Ascending aorta (tissue), 2 donors: ENCODE measurements at regions of chr4 and their contacts with region 1.

Region 1: GRCh38 chr4:16516796-16517439 is 290.6 kb upstream of the TAPT1 start:
- DNase-seq: peak in 1 of 2 donors; percentile 66
- H3K4me3 ChIP-seq: no peak overlapping the region
- H3K27ac ChIP-seq: no peak overlapping the region
- H3K4me1 ChIP-seq: no peaks in the 10 kb centered on the region
- H3K27me3 ChIP-seq: no peaks in the 10 kb centered on the region
- CTCF ChIP-seq: peak in 1 of 3 experiments; percentile 38

Region 2: DNA sequence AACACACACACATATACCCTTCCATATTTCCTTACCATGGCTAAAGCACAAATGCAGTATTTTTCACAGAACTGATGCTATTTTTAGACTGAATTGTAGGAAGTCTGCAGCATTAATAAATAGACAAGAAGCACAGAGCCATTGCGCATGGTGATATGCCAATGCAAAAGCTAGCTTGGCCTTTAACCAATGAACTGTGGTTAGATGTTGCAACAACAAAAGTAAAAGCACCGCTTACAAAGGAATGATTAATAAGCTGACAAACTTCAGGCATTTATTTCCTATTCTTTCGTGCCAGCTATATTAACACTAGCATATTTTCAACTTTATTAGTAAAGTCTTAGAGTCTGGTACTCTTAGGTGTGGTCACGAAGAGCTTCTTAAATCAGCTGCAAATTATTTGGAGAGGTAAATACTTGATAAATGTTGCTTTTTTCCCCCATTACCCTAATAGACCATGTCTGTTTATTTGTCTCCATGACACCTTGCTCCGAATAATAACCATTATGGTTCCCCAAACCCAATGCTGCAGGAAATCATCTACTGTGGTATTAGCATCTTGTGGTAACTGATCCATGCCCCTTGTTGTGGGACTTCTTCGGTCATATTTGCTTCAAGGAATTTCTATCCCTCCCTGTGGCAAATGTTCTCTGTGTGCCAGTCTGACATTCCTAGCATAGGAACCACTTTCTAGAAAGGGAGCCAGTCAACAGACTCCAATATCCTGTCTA is 15.5 kb after region 1 on chr4:
- intact Hi-C with region 1: no loop called
- DNase-seq: no peak
- H3K4me3 ChIP-seq: no peak overlapping the region
- H3K27ac ChIP-seq: peak overlapping the region; percentile 12 to 42
- H3K4me1 ChIP-seq: peaks cover 0 to 14% of the 10 kb centered on the region in 2 donors
- H3K27me3 ChIP-seq: no peaks in the 10 kb centered on the region
- CTCF ChIP-seq: no peak

Region 3: DNA sequence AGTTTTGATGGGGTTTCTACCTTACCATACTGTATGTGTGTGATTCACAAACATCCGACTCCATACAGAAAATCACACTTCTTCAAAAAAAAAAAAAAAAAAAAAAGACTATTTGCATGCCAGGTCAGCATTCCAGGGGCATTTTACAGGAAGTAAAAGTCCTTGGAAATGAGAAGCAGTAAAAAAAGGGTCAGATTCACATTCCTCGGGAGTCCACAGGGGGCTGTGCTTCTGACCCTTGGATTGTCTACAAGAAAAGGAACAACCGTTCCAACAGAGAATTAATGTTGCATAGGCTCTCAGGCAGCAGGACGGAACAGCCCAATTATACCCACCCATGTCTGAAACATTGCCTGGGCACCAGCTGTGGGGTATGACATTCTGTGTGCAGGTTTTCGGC is 91.2 kb after region 1 on chr4:
- intact Hi-C with region 1: no loop called
- DNase-seq: no peak
- H3K4me3 ChIP-seq: no peak overlapping the region
- H3K27ac ChIP-seq: no peak overlapping the region
- H3K4me1 ChIP-seq: no peaks in the 10 kb centered on the region
- H3K27me3 ChIP-seq: no peaks in the 10 kb centered on the region
- CTCF ChIP-seq: no peak

Region 4: GRCh38 chr4:16667464-16667863 is 150.5 kb after region 1 on chr4:
- intact Hi-C with region 1: no loop called
- DNase-seq: no peak
- H3K4me3 ChIP-seq: no peak overlapping the region
- H3K27ac ChIP-seq: no peak overlapping the region
- H3K4me1 ChIP-seq: peaks cover 0 to 4% of the 10 kb centered on the region in 2 donors
- H3K27me3 ChIP-seq: no peaks in the 10 kb centered on the region
- CTCF ChIP-seq: no peak

Region 5: GRCh38 chr4:16752150-16752549 is 235.2 kb after region 1 on chr4:
- intact Hi-C with region 1: loop called (anchors 10 kb)
- DNase-seq: no peak
- H3K4me3 ChIP-seq: no peak overlapping the region
- H3K27ac ChIP-seq: no peak overlapping the region
- H3K4me1 ChIP-seq: peaks cover 0 to 2% of the 10 kb centered on the region in 2 donors
- H3K27me3 ChIP-seq: no peaks in the 10 kb centered on the region
- CTCF ChIP-seq: peak in 1 of 3 experiments; percentile 22